ENCODE measurements at regions of chrX and their contacts with region 1.

Region 1: GRCh38 chrX:150049647-150050046 is 111.4 kb upstream of the EOLA2 start:
- DNase-seq: no peak
- ATAC-seq: no peak
- H3K4me3 ChIP-seq: no peak overlapping the region
- H3K27ac ChIP-seq: no peak overlapping the region
- H3K4me1 ChIP-seq: no peaks in the 10 kb centered on the region
- H3K27me3 ChIP-seq: no peaks in the 10 kb centered on the region
- CTCF ChIP-seq: no peak
- EP300 ChIP-seq: no peak
- POLR2A ChIP-seq: no peak
- RAD21 ChIP-seq: no peak

Region 2: DNA sequence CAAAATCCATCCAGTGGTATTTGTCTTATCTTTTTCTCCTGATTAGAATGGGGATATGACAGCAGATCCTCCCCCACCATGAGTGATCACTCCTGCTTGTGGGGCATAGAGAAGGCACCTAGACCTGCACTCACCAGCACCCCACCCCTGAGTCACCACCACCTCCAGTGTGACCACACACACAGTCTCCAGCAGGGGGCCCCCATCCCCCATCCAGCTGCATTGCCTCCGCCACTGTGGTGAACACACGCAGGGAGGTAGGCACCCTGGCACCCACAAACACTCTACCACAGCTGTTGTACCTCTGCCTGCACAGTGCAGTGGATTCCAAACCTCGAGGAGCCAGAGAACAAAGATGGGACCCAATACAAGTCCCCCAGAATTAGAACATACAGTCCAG is 177.7 kb before region 1 on chrX:
- CTCF ChIA-PET with region 1: no interaction called
- POLR2A ChIA-PET with region 1: no interaction called
- in situ Hi-C with region 1: no loop called
- intact Hi-C with region 1: loop called (anchors 5 kb)
- DNase-seq: peak; percentile 53 to 71 (median 62)
- ATAC-seq: peak; percentile 100
- H3K4me3 ChIP-seq: no peak overlapping the region
- H3K27ac ChIP-seq: no peak overlapping the region
- H3K4me1 ChIP-seq: no peaks in the 10 kb centered on the region; a peak in 3 of 5 replicates
- H3K27me3 ChIP-seq: no peaks in the 10 kb centered on the region
- CTCF ChIP-seq: peak; percentile 73 to 78 (median 78)
- EP300 ChIP-seq: no peak
- POLR2A ChIP-seq: no peak
- RAD21 ChIP-seq: peak; percentile 47 to 74

Measured in K562 (cell line).